Posterior cingulate gyrus (tissue), 11 donors: ENCODE measurements at regions of chr3 and their contacts with region 1.

Region 1: GRCh38 chr3:143847787-143848631 is at the start of gene SLC9A9:
- DNase-seq: peak in 7 of 10 donors; percentile 40 to 91 (median 59)

Region 2: GRCh38 chr3:143775459-143775858 is 72.5 kb before region 1 on chr3:
- intact Hi-C with region 1: loop called (anchors 10 kb)
- DNase-seq: no peak

Region 3: GRCh38 chr3:143895805-143896204 is 47.8 kb after region 1 on chr3:
- intact Hi-C with region 1: no loop called
- DNase-seq: no peak